ENCODE measurements at regions of chr19 and their contacts with region 1.

Region 1: GRCh38 chr19:36214386-36215275 is at the starts of genes ZNF146 and ZNF565:
- DNase-seq: peak; percentile 98
- H3K4me3 Mint-ChIP-seq: no peak within 1 kb of the TSS
- H3K27ac Mint-ChIP-seq: no peak within 1 kb of the TSS
- H3K4me1 Mint-ChIP-seq: peaks cover 22% of the 10 kb centered on the region
- H3K27me3 Mint-ChIP-seq: no peaks in the 10 kb centered on the region
- total RNA-seq, gene ZNF146: 82.5 to 86.5 TPM
- total RNA-seq, gene ZNF565: 2.2 to 2.3 TPM

Region 2: DNA sequence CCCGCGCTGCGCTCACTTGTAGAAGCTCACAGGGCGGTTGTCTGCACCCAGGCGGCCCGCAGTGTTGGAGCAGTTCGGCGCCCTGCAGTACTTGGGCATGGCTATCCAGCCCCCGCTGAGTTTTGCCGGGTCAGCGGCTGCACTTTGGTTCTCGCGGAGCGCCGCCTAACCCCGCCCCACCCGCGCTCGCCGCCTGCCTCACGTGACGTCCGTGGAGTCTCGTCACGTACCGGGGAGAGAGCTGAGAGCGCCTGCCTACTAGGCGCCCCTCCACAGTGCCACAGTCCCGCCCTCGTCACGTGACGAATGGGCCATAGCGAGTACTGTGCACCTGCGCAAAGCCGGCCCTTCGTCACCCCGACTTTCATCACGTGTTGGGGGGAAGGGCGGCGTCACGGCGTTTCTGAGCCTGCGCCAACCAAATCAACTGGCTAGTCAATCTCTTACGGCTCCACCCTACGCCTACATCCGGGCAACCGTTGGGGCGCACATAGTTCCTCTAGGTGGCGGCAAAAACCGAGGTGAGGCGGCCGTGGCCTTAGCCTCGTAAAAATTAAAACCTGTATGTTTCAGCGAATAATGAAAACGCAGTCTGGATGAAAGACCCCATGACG is 160.4 kb before region 1 on chr19 and contains the start of gene THAP8:
- CTCF ChIA-PET with region 1: no interaction called
- POLR2A ChIA-PET with region 1: interaction called, 4 read pairs
- intact Hi-C with region 1: loop called (anchors 1 kb)
- DNase-seq: peak; percentile 100
- H3K4me3 Mint-ChIP-seq: peak within 1 kb of the TSS; percentile 98
- H3K27ac Mint-ChIP-seq: peak within 1 kb of the TSS; percentile 98
- H3K4me1 Mint-ChIP-seq: peaks cover 18% of the 10 kb centered on the region
- H3K27me3 Mint-ChIP-seq: no peaks in the 10 kb centered on the region
- total RNA-seq, gene THAP8: 2.1 to 2.2 TPM

Region 3: GRCh38 chr19:36139473-36140303 is 74.9 kb before region 1 on chr19 and contains the start of gene CAPNS1:
- CTCF ChIA-PET with region 1: no interaction called
- POLR2A ChIA-PET with region 1: no interaction called
- intact Hi-C with region 1: loop called (anchors 1 kb)
- DNase-seq: peak; percentile 96
- H3K4me3 Mint-ChIP-seq: peak within 1 kb of the TSS; percentile 92
- H3K27ac Mint-ChIP-seq: peak within 1 kb of the TSS; percentile 97
- H3K4me1 Mint-ChIP-seq: peaks cover 26% of the 10 kb centered on the region
- H3K27me3 Mint-ChIP-seq: no peaks in the 10 kb centered on the region
- total RNA-seq, gene CAPNS1: 430 to 447 TPM

Region 4: DNA sequence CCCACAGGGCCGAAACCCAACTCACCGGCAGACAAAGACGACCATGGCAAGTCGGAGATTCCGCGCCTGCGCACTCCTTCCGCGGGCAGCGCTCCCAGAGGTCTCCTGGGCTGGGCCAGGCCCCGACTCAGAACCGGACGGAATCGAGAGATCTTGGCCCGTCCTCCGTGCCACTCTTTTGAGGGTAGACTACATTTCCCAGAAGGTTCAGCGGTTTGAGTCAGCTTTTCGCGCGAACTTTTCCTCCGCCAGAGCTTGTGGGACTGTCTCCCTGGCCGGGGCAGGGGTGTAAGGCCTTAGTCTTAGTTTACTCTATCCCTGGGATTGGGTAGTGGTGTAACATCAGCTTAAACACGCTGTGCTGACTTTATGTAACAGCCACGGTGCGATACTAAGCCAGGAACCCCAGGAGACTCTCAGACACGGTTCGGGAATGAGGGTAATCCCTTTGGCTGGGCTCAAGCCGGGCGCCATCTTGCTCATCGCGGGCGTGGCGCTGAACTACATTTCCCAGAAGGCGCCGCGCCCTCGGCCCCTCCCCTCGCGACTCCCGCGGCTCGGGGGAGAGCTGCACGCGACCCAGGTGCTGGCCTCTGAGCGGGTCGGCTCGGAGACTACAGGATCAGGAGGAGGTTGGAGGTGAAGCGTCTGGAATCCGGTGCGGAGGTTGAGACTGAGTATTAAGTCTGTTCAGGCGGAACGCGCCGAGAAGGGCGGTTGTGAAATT is 313.7 kb after region 1 on chr19 and contains the start of gene ZNF260:
- CTCF ChIA-PET with region 1: no interaction called
- POLR2A ChIA-PET with region 1: interaction called, 5 read pairs
- intact Hi-C with region 1: loop called (anchors 1 kb)
- DNase-seq: peak; percentile 96
- H3K4me3 Mint-ChIP-seq: peak within 1 kb of the TSS; percentile 99
- H3K27ac Mint-ChIP-seq: peak within 1 kb of the TSS; percentile 95
- H3K4me1 Mint-ChIP-seq: peaks cover 21% of the 10 kb centered on the region
- H3K27me3 Mint-ChIP-seq: no peaks in the 10 kb centered on the region
- total RNA-seq, gene ZNF260: 3.7 TPM

Region 5: DNA sequence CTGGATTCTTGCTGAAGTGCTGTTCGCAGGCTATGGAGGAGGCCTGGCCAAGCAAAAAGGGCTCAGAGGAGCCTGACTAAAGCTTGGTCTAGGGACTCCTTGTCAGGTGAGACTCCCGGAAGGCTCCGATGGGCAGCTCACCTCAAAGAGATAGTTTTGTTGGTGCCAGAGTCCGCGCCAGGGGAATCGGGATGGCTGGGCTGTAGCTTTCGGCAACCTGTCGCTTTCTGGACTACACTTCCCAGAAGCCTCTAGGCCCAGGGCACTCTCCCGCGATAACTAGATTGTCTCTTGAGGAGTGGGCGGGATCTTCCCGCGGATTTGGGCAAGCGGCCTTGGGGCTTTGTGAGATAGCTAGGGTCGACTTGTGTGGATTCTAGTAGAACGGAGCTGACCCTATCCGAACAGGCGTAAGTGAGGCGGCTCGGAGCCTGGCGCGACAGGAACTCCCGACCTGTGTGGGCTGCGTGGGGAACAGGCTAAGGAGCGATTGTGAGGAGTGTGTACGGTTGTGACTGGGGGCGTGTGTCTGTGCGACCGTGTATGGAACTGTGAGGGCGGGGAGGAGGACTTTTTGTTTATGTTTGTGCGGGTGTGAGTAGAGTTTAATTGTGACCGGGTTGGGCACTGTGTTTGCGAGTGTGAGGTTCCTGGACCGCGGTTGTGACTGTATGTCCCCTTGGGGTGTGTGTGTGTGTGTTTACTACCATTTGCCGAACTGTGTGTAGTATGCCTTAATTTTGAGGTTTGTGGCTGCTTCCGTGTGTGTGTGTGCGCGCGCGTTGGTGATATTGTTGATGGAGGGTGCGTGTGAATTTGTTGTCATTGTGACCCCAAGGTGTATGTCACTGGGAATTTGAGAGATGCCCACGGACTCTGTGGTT is 636.2 kb after region 1 on chr19 and contains the start of gene ZNF345:
- CTCF ChIA-PET with region 1: no interaction called
- POLR2A ChIA-PET with region 1: interaction called, 10 read pairs
- intact Hi-C with region 1: no loop called
- DNase-seq: peak; percentile 92
- H3K4me3 Mint-ChIP-seq: no peak within 1 kb of the TSS
- H3K27ac Mint-ChIP-seq: no peak within 1 kb of the TSS
- H3K4me1 Mint-ChIP-seq: peaks cover 12% of the 10 kb centered on the region
- H3K27me3 Mint-ChIP-seq: no peaks in the 10 kb centered on the region
- total RNA-seq, gene ZNF345: 3.8 to 4.2 TPM

Region 6: DNA sequence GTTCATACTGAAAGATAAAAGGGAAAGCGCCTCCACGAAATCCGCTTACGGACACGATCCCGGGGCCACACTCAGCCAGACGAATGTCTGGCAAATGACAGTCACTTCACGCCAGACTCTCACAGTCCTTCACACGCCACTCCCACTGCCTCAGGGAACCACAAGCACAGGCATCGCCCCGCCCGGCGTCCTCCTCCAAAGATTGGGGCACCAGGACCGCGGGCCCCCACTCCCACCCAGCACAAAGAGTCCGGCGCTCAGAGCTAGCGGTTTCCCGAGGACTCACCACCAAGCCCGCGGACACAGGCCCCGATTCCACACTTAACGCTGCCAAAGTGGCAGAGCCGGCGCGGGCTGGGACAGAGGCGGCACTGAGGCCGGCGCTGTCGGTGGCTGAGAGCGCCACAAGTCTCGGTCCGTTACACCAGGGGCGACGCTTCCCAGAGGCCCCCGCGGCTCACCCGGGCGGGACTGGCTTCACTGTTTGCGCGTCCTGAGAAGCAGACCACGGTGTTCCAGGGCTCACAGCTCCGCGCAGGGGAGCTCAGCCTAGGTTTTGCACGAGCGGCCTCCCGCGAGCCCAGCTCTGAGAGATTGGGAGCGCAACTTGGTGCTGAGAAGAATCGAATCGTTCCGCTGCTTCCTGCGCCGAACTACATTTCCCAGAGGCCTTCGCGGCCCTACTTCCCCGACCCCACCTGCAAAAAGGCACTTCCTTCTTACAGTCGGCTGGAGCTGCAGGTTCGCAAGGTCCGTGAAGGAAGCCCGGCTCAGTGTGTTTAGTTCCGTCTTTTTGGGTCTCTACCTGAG is 1252.4 kb after region 1 on chr19 and contains the start of gene ZNF569:
- CTCF ChIA-PET with region 1: no interaction called
- POLR2A ChIA-PET with region 1: no interaction called
- intact Hi-C with region 1: loop called (anchors 5 kb)
- DNase-seq: peak; percentile 93
- H3K4me3 Mint-ChIP-seq: peak within 1 kb of the TSS; percentile 92
- H3K27ac Mint-ChIP-seq: peak within 1 kb of the TSS; percentile 94
- H3K4me1 Mint-ChIP-seq: peaks cover 29% of the 10 kb centered on the region
- H3K27me3 Mint-ChIP-seq: no peaks in the 10 kb centered on the region
- total RNA-seq, gene ZNF569: 5.3 to 7.2 TPM

Measured in activated CD4-positive, alpha-beta memory T cell treated with anti-CD3 and anti-CD28 coated beads for 36 hours (primary cell).